Activated T-helper 1 cell treated with anti-CD3 and anti-CD28 coated beads, Interleukin-12 subunit alpha, Interleukin-12 subunit beta, Interleukin-2, Interleukin-4 antibody, amounts not matched to agents 30 ng/mL and 10 ng/mL and 1 ng/mL, durations not matched to agents 14 hours and 24 hours and 36 hours (primary cell): ENCODE measurements at regions of chr14 and their contacts with region 1.

Region 1: DNA sequence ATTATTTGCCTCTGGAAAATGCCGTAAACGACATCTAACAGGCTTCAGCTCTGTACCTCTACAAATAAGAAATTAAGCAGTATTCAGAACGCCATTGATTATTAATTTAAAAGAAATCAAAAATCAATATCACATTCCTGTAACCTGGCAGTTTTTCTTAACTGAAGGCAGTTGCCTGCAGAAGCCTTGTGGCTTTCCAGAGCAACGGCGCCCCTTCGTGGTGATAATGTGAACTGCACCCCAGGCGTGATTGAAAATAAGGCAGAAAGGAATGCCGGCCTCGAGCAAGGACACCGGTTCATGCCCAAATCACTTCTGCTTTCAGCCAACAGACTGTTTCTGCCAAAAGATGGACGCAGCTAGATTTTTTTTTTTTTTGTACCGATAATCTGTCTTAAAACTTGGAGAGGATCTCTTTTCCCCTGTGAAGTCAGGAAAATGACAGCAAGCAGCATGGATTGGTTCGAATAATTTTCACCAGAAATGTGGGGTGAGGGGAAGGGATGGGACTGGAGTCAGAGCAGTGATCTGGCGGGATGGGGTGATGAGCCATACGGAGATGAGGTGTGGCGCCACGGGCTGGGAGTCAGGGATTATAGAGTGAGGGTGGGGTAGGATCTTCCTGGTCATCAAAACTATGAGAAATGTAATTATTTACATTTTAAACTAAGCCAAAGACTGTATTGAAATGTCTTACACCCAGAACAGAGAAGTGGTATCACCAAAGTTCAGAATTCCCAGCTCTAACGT is 473.0 kb downstream of the DPF3 start:
- DNase-seq: peak; percentile 69
- H3K4me3 Mint-ChIP-seq: no peak overlapping the region
- H3K27ac Mint-ChIP-seq: peak overlapping the region; percentile 58
- H3K4me1 Mint-ChIP-seq: peaks cover 27% of the 10 kb centered on the region
- H3K27me3 Mint-ChIP-seq: peaks cover 2% of the 10 kb centered on the region

Region 2: GRCh38 chr14:71932220-71932981 is 488.5 kb before region 1 on chr14 and contains the start of gene RGS6:
- intact Hi-C with region 1: loop called (anchors 5 kb)
- DNase-seq: peak; percentile 11
- H3K4me3 Mint-ChIP-seq: peak within 1 kb of the TSS; percentile 69
- H3K27ac Mint-ChIP-seq: peak within 1 kb of the TSS; percentile 68
- H3K4me1 Mint-ChIP-seq: peaks cover 18% of the 10 kb centered on the region
- H3K27me3 Mint-ChIP-seq: peaks cover 54% of the 10 kb centered on the region
- total RNA-seq, gene RGS6: 2.0 and 2.4 TPM in 2 replicates

Region 3: GRCh38 chr14:72023722-72024407 is 397.0 kb before region 1 on chr14:
- intact Hi-C with region 1: loop called (anchors 1 kb)
- DNase-seq: peak; percentile 38
- H3K4me3 Mint-ChIP-seq: peak overlapping the region; percentile 28
- H3K27ac Mint-ChIP-seq: no peak overlapping the region
- H3K4me1 Mint-ChIP-seq: peaks cover 13% of the 10 kb centered on the region
- H3K27me3 Mint-ChIP-seq: peaks cover 17% of the 10 kb centered on the region

Region 4: GRCh38 chr14:72104011-72104613 is 316.8 kb before region 1 on chr14:
- intact Hi-C with region 1: loop called (anchors 5 kb)
- DNase-seq: no peak
- H3K4me3 Mint-ChIP-seq: no peak overlapping the region
- H3K27ac Mint-ChIP-seq: no peak overlapping the region
- H3K4me1 Mint-ChIP-seq: no peaks in the 10 kb centered on the region
- H3K27me3 Mint-ChIP-seq: peaks cover 22% of the 10 kb centered on the region

Region 5: GRCh38 chr14:72291908-72292688 is 128.8 kb before region 1 on chr14:
- intact Hi-C with region 1: loop called (anchors 5 kb)
- DNase-seq: no peak
- H3K4me3 Mint-ChIP-seq: no peak overlapping the region
- H3K27ac Mint-ChIP-seq: no peak overlapping the region
- H3K4me1 Mint-ChIP-seq: no peaks in the 10 kb centered on the region
- H3K27me3 Mint-ChIP-seq: peaks cover 8% of the 10 kb centered on the region

Region 6: DNA sequence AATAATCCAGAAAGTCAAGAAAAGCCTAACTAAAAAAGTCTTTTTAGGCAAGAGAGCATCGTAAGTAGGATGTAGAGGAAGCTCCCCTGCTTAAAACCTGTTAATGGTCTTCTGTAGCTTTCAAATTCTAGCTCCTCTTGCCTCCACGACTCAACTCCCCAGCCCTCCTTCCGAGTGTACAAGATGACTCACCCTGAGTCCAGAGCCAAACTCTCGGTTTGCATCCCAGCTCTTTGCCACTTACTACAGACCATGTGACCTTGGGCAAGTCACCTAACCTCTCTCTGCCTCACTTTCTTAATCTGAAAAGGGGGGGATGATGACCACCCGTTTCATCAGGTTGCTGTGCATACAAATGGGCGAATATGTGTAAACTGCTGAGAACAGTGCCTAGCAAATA is 12.6 kb after region 1 on chr14:
- intact Hi-C with region 1: no loop called
- DNase-seq: no peak
- H3K4me3 Mint-ChIP-seq: no peak overlapping the region
- H3K27ac Mint-ChIP-seq: no peak overlapping the region
- H3K4me1 Mint-ChIP-seq: peaks cover 53% of the 10 kb centered on the region
- H3K27me3 Mint-ChIP-seq: no peaks in the 10 kb centered on the region

Region 7: DNA sequence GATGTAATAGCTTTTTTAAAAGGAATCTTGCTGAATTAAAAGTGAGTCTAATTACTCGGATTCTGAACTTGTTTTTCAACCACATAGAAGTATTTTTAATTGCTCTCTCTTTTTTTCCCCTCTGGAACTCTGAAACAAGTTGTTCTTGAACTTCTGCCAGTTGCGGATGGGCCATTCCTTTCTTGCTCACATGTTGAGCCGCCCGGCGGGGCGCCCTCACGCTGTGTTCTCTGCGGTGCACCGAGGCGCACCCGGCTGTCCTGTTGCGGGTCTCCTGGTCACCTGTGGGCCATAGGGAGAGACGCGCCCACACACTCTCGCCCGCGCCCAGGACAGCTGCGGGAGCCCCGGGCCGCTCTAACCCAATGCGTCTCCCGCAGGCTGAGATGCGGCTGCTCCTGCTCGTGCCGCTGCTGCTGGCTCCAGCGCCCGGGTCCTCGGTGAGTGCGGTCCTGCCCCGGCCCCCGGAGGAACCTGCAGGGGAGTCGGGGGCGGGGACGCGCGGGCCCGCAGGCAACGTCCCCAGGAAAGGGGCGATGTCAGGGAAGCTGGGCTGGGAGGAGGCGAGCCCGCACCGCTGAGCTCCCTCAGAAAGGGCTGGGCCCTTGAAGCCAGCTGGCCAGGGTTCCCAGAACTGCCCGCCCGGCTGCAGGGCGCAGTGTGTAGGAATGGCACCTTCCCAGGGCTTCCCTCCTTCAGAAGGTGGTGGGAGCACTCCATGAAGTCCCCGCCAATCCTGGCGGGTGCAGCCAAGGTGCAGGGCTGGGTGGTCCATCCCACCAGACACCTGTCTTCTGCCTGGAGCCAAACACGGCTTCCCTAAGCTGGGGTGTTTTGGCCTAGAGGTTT is 818.7 kb after region 1 on chr14:
- intact Hi-C with region 1: no loop called
- DNase-seq: no peak
- H3K4me3 Mint-ChIP-seq: no peak overlapping the region
- H3K27ac Mint-ChIP-seq: peak overlapping the region; percentile 34
- H3K4me1 Mint-ChIP-seq: peaks cover 31% of the 10 kb centered on the region
- H3K27me3 Mint-ChIP-seq: peaks cover 77% of the 10 kb centered on the region